ENCODE measurements at regions of chr9 and their contacts with region 1.

Region 1: GRCh38 chr9:20442461-20443319 is 179.6 kb downstream of the MLLT3 start:
- DNase-seq: no peak
- H3K4me3 Mint-ChIP-seq: peak overlapping the region; percentile 13
- H3K27ac Mint-ChIP-seq: peak overlapping the region; percentile 3
- H3K4me1 Mint-ChIP-seq: peaks cover 32% of the 10 kb centered on the region
- H3K27me3 Mint-ChIP-seq: no peaks in the 10 kb centered on the region

Region 2: GRCh38 chr9:20479419-20480155 is 36.9 kb after region 1 on chr9:
- intact Hi-C with region 1: loop called (anchors 5 kb)
- DNase-seq: no peak
- H3K4me3 Mint-ChIP-seq: no peak overlapping the region
- H3K27ac Mint-ChIP-seq: no peak overlapping the region
- H3K4me1 Mint-ChIP-seq: peaks cover 22% of the 10 kb centered on the region
- H3K27me3 Mint-ChIP-seq: no peaks in the 10 kb centered on the region

Region 3: GRCh38 chr9:20508242-20508641 is 65.6 kb after region 1 on chr9:
- intact Hi-C with region 1: loop called (anchors 5 kb)
- DNase-seq: peak; percentile 79
- H3K4me3 Mint-ChIP-seq: peak overlapping the region; percentile 61
- H3K27ac Mint-ChIP-seq: peak overlapping the region; percentile 77
- H3K4me1 Mint-ChIP-seq: peaks cover 67% of the 10 kb centered on the region
- H3K27me3 Mint-ChIP-seq: no peaks in the 10 kb centered on the region

Region 4: GRCh38 chr9:20552874-20553575 is 110.3 kb after region 1 on chr9:
- intact Hi-C with region 1: loop called (anchors 5 kb)
- DNase-seq: peak; percentile 69
- H3K4me3 Mint-ChIP-seq: peak overlapping the region; percentile 57
- H3K27ac Mint-ChIP-seq: peak overlapping the region; percentile 82
- H3K4me1 Mint-ChIP-seq: peaks cover 67% of the 10 kb centered on the region
- H3K27me3 Mint-ChIP-seq: no peaks in the 10 kb centered on the region